ENCODE measurements at regions of chr11 and their contacts with region 1.

Region 1: DNA sequence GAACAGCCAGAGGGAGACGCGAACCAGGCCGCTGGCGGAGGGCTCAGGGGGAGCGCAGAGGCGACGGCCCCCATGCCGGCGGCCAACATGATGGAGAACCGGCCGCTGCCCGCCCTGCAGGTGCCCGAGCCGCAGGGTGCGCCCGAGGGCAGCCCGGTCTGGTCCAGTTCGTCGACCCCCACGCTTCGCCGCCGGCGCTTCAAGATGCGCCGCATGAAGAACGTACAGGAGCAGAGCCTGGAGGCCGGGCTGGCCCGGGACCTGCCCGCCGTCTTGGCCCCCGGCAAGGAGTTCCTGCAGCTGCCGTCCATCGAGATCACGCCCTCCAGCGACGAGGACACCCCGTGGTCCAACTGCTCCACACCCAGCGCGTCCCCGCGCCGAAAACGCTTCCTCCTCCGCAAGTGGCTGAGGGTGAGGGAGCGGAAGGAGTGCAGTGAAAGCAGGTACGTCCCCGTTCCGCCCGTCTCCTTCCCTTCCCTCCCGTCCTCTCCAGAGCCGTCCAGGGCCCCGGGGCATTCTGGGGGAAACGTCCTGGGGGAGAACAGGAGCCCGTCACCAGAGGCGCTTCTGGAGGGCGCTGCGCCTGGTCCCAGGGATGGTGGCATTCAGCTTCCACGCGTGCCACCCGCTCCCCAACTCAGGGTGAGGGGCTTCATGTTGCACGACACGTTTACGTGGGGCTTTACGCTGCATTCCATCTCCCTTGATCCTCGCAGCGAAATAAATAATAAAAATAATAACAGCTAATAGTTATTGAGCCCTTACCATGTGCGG is 840 bp downstream of the GRAMD1B start:
- DNase-seq: no peak
- H3K4me3 ChIP-seq: peak overlapping the region; percentile 78
- H3K27ac ChIP-seq: peak overlapping the region; percentile 52
- H3K27me3 ChIP-seq: no peaks in the 10 kb centered on the region
- CTCF ChIP-seq: no peak

Region 2: DNA sequence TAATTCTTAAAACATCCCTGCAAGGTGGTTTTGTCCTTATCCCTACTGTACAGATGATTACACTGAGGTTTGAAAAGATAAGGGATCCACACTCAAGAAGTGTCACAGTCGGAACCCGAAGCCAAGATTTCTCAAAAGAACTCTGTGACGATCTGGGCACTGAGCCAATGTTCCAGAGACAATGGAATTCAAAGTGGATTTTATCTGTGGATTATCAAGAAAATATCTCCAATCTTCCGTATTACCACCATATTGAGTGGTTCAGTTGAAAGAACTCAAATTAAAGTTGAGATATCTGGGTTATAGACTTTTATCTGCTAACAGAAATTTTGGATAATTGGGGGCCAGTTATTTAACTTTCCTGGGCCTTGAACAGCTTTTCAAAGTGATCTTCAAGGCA is 100.8 kb before region 1 on chr11:
- CTCF ChIA-PET with region 1: no interaction called
- POLR2A ChIA-PET with region 1: no interaction called
- DNase-seq: no peak
- H3K4me3 ChIP-seq: no peak overlapping the region
- H3K27ac ChIP-seq: no peak overlapping the region
- H3K27me3 ChIP-seq: peaks cover 13% of the 10 kb centered on the region
- CTCF ChIP-seq: no peak

Region 3: GRCh38 chr11:123407130-123407995 is 23.5 kb before region 1 on chr11:
- CTCF ChIA-PET with region 1: interaction called, 10 read pairs
- POLR2A ChIA-PET with region 1: no interaction called
- DNase-seq: peak; percentile 29
- H3K4me3 ChIP-seq: no peak overlapping the region
- H3K27ac ChIP-seq: no peak overlapping the region
- H3K27me3 ChIP-seq: peaks cover 21% of the 10 kb centered on the region
- CTCF ChIP-seq: peak; percentile 78

Region 4: GRCh38 chr11:123448823-123449222 is 17.9 kb after region 1 on chr11:
- CTCF ChIA-PET with region 1: no interaction called
- POLR2A ChIA-PET with region 1: no interaction called
- DNase-seq: no peak
- H3K4me3 ChIP-seq: no peak overlapping the region
- H3K27ac ChIP-seq: no peak overlapping the region
- H3K27me3 ChIP-seq: no peaks in the 10 kb centered on the region
- CTCF ChIP-seq: no peak